CD4-positive, alpha-beta T cell (primary cell): ENCODE measurements at regions of chr19 and their contacts with region 1.

Region 1: GRCh38 chr19:13880059-13881043 is 3.4 kb downstream of the NANOS3 start:
- DNase-seq: peak; percentile 92 to 99 (median 98)
- ATAC-seq: peak; percentile 96
- H3K4me3 ChIP-seq: peak overlapping the region; percentile 27
- H3K4me3 Mint-ChIP-seq: peak overlapping the region; percentile 70
- H3K27ac ChIP-seq: peak overlapping the region; percentile 14 to 32
- H3K27ac Mint-ChIP-seq: peak overlapping the region; percentile 76
- H3K4me1 ChIP-seq: peaks cover 57% of the 10 kb centered on the region
- H3K4me1 Mint-ChIP-seq: peaks cover 41% of the 10 kb centered on the region
- H3K27me3 ChIP-seq: no peaks in the 10 kb centered on the region
- H3K27me3 Mint-ChIP-seq: no peaks in the 10 kb centered on the region
- CTCF ChIP-seq: peak; percentile 99

Region 2: DNA sequence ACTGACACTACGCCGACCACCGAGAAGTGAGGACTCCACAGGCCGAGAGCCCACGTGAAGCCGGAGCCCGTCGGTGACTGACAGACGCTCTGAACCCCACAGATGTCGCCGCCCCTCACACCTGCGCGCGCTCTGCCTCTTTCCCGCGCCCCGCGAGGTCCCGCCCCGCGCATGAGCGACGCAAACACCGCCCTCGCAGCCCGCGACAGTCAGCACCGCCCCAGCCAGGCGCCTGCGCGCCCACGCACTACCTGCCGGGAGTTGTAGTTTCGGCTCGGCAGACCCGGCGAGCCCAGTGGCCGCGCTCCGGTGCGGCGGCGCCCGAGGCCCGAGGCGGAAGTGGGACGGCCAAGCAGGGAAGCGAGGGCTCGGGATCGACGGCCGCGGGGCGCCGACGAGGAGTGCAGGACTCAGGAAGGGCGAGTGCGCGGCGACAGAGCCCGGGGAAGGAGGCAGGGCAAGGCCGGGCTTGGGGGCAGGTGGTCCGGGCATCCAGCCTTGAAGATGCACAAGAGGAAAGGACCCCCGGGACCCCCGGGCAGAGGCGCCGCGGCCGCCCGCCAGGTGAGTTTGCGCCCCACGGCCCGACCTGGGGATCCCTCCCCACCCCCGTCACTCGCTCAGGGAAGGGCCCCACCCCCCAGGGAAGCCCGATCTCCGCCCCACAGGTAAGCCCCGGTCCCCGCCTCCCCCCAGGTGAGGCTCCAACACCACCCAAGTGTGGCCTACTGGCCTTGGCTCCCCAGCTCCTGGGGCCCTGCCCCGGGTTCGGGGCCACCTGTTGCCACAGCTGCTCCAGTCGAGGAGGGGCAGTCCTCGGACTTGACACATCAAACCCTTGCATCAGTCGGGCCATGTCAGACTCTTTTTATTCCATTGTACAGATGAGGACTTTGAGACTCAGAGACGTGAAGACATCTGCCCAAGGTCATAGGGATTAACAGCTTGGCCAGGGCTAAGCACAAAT is 25.9 kb after region 1 on chr19 and contains the starts of genes BRME1 and CC2D1A:
- CTCF ChIA-PET with region 1: interaction called, 4 read pairs
- POLR2A ChIA-PET with region 1: interaction called, 4 read pairs
- intact Hi-C with region 1: loop called in 1 of 2 experiments (anchors 2 kb)
- DNase-seq: peak; percentile 88 to 96 (median 92)
- ATAC-seq: peak; percentile 99
- H3K4me3 ChIP-seq: peak within 1 kb of the TSS; percentile 77
- H3K4me3 Mint-ChIP-seq: peak within 1 kb of the TSS; percentile 92
- H3K27ac ChIP-seq: peak within 1 kb of the TSS in 1 of 2 donors; percentile 49
- H3K27ac Mint-ChIP-seq: peak within 1 kb of the TSS; percentile 66
- H3K4me1 ChIP-seq: peaks cover 24% of the 10 kb centered on the region
- H3K4me1 Mint-ChIP-seq: peaks cover 13% of the 10 kb centered on the region
- H3K27me3 ChIP-seq: no peaks in the 10 kb centered on the region
- H3K27me3 Mint-ChIP-seq: no peaks in the 10 kb centered on the region
- CTCF ChIP-seq: no peak
- total RNA-seq, gene BRME1: 1.1 to 1.3 TPM
- total RNA-seq, gene CC2D1A: 16.4 to 16.9 TPM

Region 3: GRCh38 chr19:14031719-14032480 is 151.5 kb after region 1 on chr19 and contains the start of gene IL27RA:
- CTCF ChIA-PET with region 1: interaction called, 3 read pairs
- POLR2A ChIA-PET with region 1: interaction called, 19 read pairs
- intact Hi-C with region 1: loop called in 1 of 2 experiments (anchors 1 kb)
- DNase-seq: peak; percentile 67 to 94 (median 83)
- ATAC-seq: peak; percentile 82
- H3K4me3 ChIP-seq: peak within 1 kb of the TSS; percentile 86
- H3K4me3 Mint-ChIP-seq: peak within 1 kb of the TSS; percentile 98
- H3K27ac ChIP-seq: peak within 1 kb of the TSS; percentile 93 to 98
- H3K27ac Mint-ChIP-seq: peak within 1 kb of the TSS; percentile 94
- H3K4me1 ChIP-seq: peaks cover 49% of the 10 kb centered on the region
- H3K4me1 Mint-ChIP-seq: peaks cover 36% of the 10 kb centered on the region
- H3K27me3 ChIP-seq: no peaks in the 10 kb centered on the region
- H3K27me3 Mint-ChIP-seq: no peaks in the 10 kb centered on the region
- CTCF ChIP-seq: no peak
- total RNA-seq, gene IL27RA: 25.0 to 26.7 TPM

Region 4: GRCh38 chr19:14073261-14073924 is 193.0 kb after region 1 on chr19:
- CTCF ChIA-PET with region 1: interaction called, 27 read pairs
- POLR2A ChIA-PET with region 1: interaction called, 5 read pairs
- intact Hi-C with region 1: loop called (anchors 1 kb)
- DNase-seq: peak; percentile 55 to 92 (median 72)
- ATAC-seq: peak; percentile 79
- H3K4me3 ChIP-seq: peak overlapping the region; percentile 77
- H3K4me3 Mint-ChIP-seq: peak overlapping the region; percentile 93
- H3K27ac ChIP-seq: no peak overlapping the region
- H3K27ac Mint-ChIP-seq: peak overlapping the region; percentile 83
- H3K4me1 ChIP-seq: peaks cover 38% of the 10 kb centered on the region
- H3K4me1 Mint-ChIP-seq: peaks cover 17% of the 10 kb centered on the region
- H3K27me3 ChIP-seq: peaks cover 4 to 5% of the 10 kb centered on the region in 2 experiments
- H3K27me3 Mint-ChIP-seq: peaks cover 4% of the 10 kb centered on the region
- CTCF ChIP-seq: no peak

Region 5: GRCh38 chr19:14354445-14354844 is 474.1 kb after region 1 on chr19:
- CTCF ChIA-PET with region 1: no interaction called
- POLR2A ChIA-PET with region 1: no interaction called
- intact Hi-C with region 1: loop called in 1 of 2 experiments (anchors 5 kb)
- DNase-seq: peak in 1 of 14 experiments; percentile 46
- ATAC-seq: no peak
- H3K4me3 ChIP-seq: no peak overlapping the region
- H3K4me3 Mint-ChIP-seq: no peak overlapping the region
- H3K27ac ChIP-seq: no peak overlapping the region
- H3K27ac Mint-ChIP-seq: peak overlapping the region; percentile 70
- H3K4me1 ChIP-seq: peaks cover 60% of the 10 kb centered on the region
- H3K4me1 Mint-ChIP-seq: peaks cover 37% of the 10 kb centered on the region
- H3K27me3 ChIP-seq: no peaks in the 10 kb centered on the region
- H3K27me3 Mint-ChIP-seq: no peaks in the 10 kb centered on the region
- CTCF ChIP-seq: no peak